ENCODE measurements at regions of chr9 and their contacts with region 1.

Region 1: DNA sequence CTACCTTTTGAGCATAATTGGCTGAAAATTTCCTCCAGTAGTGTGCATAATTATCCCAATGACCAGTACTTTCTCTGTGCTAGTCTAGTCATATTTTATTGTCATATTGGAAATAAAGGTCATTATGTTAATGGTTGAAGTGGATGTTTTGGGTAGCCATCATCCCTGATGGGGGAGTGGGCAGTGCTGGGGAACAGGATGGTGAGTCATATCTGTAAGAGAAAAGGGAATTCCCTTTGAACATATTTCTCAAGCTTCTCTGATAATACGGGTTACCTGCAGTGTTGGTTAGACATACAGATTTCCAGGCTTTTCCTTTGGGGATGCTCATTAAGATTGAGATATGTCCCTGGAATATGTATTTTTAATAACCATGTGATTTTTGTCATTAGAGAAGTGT is 33.3 kb upstream of the SPATA31D4 start:
- DNase-seq: no peak
- H3K4me3 ChIP-seq: no peak overlapping the region
- H3K27ac ChIP-seq: no peak overlapping the region
- H3K4me1 ChIP-seq: no peaks in the 10 kb centered on the region
- H3K27me3 ChIP-seq: no peaks in the 10 kb centered on the region
- CTCF ChIP-seq: no peak
- EP300 ChIP-seq: no peak
- POLR2A ChIP-seq: no peak

Region 2: GRCh38 chr9:82031322-82032280 is 136.7 kb after region 1 on chr9:
- intact Hi-C with region 1: no loop called
- DNase-seq: no peak
- H3K4me3 ChIP-seq: no peak overlapping the region
- H3K27ac ChIP-seq: no peak overlapping the region
- H3K4me1 ChIP-seq: peaks cover 0 to 18% (median 3%) of the 10 kb centered on the region in 4 donors
- H3K27me3 ChIP-seq: no peaks in the 10 kb centered on the region
- CTCF ChIP-seq: no peak
- EP300 ChIP-seq: no peak
- POLR2A ChIP-seq: no peak

Region 3: GRCh38 chr9:82397534-82397933 is 502.6 kb after region 1 on chr9:
- intact Hi-C with region 1: loop called (anchors 5 kb)
- DNase-seq: no peak
- H3K4me3 ChIP-seq: no peak overlapping the region
- H3K27ac ChIP-seq: no peak overlapping the region
- H3K4me1 ChIP-seq: no peaks in the 10 kb centered on the region
- H3K27me3 ChIP-seq: no peaks in the 10 kb centered on the region
- CTCF ChIP-seq: no peak
- EP300 ChIP-seq: no peak
- POLR2A ChIP-seq: no peak